ENCODE measurements at regions of chr1 and their contacts with region 1.

Region 1: GRCh38 chr1:67713057-67713846 is 28.3 kb downstream of the GADD45A start:
- DNase-seq: peak; percentile 68
- H3K4me3 Mint-ChIP-seq: peak overlapping the region; percentile 29
- H3K27ac Mint-ChIP-seq: peak overlapping the region; percentile 58
- H3K4me1 Mint-ChIP-seq: peaks cover 73% of the 10 kb centered on the region
- H3K27me3 Mint-ChIP-seq: no peaks in the 10 kb centered on the region
- CTCF ChIP-seq: no peak

Region 2: GRCh38 chr1:67748630-67749029 is 35.4 kb after region 1 on chr1:
- CTCF ChIA-PET with region 1: no interaction called
- intact Hi-C with region 1: loop called (anchors 5 kb)
- DNase-seq: peak; percentile 28
- H3K4me3 Mint-ChIP-seq: peak overlapping the region; percentile 54
- H3K27ac Mint-ChIP-seq: peak overlapping the region; percentile 54
- H3K4me1 Mint-ChIP-seq: peaks cover 90% of the 10 kb centered on the region
- H3K27me3 Mint-ChIP-seq: no peaks in the 10 kb centered on the region
- CTCF ChIP-seq: no peak